ENCODE measurements at regions of chr2 and their contacts with region 1.

Region 1: DNA sequence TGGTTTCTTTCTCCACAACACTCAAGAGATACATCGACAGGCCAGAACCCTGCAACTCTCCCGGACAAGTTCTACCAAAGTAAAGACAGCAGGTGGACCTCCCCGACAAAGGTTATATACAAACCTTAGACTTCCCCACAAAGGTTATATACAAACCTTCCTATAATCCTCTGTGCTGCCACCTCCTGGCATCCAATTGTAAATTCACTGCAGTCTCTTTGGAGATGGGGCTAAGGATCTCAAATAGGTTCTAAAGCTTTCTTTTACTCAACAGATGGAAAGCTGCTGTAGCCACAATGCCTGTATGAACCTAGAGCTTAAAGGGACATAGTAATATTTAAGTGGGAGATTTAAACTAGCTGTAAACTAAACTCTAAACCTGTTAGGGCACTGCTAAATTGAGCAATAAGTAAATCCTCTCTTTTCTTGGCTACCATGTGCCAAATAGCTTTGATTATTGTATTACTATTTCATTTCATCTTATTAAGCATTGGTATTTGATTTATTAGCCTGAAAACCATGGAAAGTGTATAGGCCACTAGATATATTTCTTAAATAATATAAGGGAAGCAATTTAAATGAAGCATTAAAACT is 9.8 kb upstream of the MREG start:
- DNase-seq: peak in 25 of 35 experiments; percentile 7 to 68 (median 29)
- ATAC-seq: peak in 3 of 4 experiments; percentile 52 to 73 (median 57)
- H3K4me3 ChIP-seq: no peak overlapping the region
- H3K4me3 Mint-ChIP-seq: no peak overlapping the region
- H3K27ac ChIP-seq: no peak overlapping the region
- H3K27ac Mint-ChIP-seq: no peak overlapping the region
- H3K4me1 ChIP-seq: no peaks in the 10 kb centered on the region
- H3K4me1 Mint-ChIP-seq: peaks cover 4 to 7% (median 5%) of the 10 kb centered on the region in 3 donors
- H3K27me3 ChIP-seq: no peaks in the 10 kb centered on the region
- H3K27me3 Mint-ChIP-seq: no peaks in the 10 kb centered on the region

Region 2: GRCh38 chr2:215949991-215950404 is 73.2 kb before region 1 on chr2:
- CTCF ChIA-PET with region 1: interaction called, 12 to 22 read pairs
- POLR2A ChIA-PET with region 1: no interaction called
- DNase-seq: peak in 1 of 35 experiments; percentile 51
- ATAC-seq: peak in 3 of 4 experiments; percentile 40 to 56 (median 41)
- H3K4me3 ChIP-seq: no peak overlapping the region
- H3K4me3 Mint-ChIP-seq: no peak overlapping the region
- H3K27ac ChIP-seq: no peak overlapping the region
- H3K27ac Mint-ChIP-seq: no peak overlapping the region
- H3K4me1 ChIP-seq: peaks cover 0 to 2% of the 10 kb centered on the region in 2 experiments
- H3K4me1 Mint-ChIP-seq: no peaks in the 10 kb centered on the region
- H3K27me3 ChIP-seq: no peaks in the 10 kb centered on the region
- H3K27me3 Mint-ChIP-seq: no peaks in the 10 kb centered on the region

Region 3: DNA sequence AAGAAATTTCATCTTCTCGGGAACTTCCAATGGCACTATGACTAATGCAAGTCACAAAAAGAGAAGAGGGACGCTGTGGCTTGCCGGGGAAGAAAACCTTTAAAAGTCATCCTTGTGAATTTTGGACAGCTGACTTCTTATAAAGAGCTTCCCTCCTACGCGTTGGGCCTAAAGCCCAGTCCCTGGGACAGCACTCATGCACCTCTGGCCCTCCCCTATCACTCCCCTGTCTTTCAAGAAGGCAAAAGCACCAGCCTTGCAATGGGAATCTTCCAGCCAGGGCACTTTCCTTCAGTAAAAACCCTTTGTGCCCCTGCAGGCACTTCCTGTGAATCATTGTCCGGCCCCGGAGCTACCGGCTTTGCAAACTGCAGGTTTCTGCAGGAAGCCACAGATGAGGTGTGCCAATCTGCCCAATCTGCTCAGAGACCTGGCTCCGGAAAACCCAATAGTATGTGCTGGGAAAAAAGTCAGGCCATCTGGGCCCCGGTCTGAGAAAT is 16.9 kb before region 1 on chr2:
- CTCF ChIA-PET with region 1: interaction called in 1 of 2 experiments, 11 read pairs
- POLR2A ChIA-PET with region 1: no interaction called
- DNase-seq: peak in 14 of 35 experiments; percentile 6 to 35 (median 16)
- ATAC-seq: peak; percentile 57 to 80 (median 68)
- H3K4me3 ChIP-seq: no peak overlapping the region
- H3K4me3 Mint-ChIP-seq: peak overlapping the region; percentile 5 to 25 (median 13)
- H3K27ac ChIP-seq: no peak overlapping the region
- H3K27ac Mint-ChIP-seq: peak overlapping the region; percentile 69 to 77
- H3K4me1 ChIP-seq: peaks cover 22 to 37% of the 10 kb centered on the region in 2 experiments
- H3K4me1 Mint-ChIP-seq: peaks cover 35 to 47% (median 44%) of the 10 kb centered on the region in 3 donors
- H3K27me3 ChIP-seq: no peaks in the 10 kb centered on the region
- H3K27me3 Mint-ChIP-seq: no peaks in the 10 kb centered on the region

Region 4: GRCh38 chr2:216034065-216034464 is 10.9 kb after region 1 on chr2:
- CTCF ChIA-PET with region 1: interaction called, 9 to 11 read pairs
- POLR2A ChIA-PET with region 1: interaction called in 1 of 2 experiments, 7 read pairs
- DNase-seq: peak; percentile 30 to 85 (median 67)
- ATAC-seq: peak; percentile 72 to 83 (median 80)
- H3K4me3 ChIP-seq: no peak overlapping the region
- H3K4me3 Mint-ChIP-seq: no peak overlapping the region
- H3K27ac ChIP-seq: no peak overlapping the region
- H3K27ac Mint-ChIP-seq: no peak overlapping the region
- H3K4me1 ChIP-seq: peaks cover 4% of the 10 kb centered on the region in 2 experiments
- H3K4me1 Mint-ChIP-seq: peaks cover 12 to 25% (median 15%) of the 10 kb centered on the region in 3 donors
- H3K27me3 ChIP-seq: no peaks in the 10 kb centered on the region
- H3K27me3 Mint-ChIP-seq: no peaks in the 10 kb centered on the region

Region 5: DNA sequence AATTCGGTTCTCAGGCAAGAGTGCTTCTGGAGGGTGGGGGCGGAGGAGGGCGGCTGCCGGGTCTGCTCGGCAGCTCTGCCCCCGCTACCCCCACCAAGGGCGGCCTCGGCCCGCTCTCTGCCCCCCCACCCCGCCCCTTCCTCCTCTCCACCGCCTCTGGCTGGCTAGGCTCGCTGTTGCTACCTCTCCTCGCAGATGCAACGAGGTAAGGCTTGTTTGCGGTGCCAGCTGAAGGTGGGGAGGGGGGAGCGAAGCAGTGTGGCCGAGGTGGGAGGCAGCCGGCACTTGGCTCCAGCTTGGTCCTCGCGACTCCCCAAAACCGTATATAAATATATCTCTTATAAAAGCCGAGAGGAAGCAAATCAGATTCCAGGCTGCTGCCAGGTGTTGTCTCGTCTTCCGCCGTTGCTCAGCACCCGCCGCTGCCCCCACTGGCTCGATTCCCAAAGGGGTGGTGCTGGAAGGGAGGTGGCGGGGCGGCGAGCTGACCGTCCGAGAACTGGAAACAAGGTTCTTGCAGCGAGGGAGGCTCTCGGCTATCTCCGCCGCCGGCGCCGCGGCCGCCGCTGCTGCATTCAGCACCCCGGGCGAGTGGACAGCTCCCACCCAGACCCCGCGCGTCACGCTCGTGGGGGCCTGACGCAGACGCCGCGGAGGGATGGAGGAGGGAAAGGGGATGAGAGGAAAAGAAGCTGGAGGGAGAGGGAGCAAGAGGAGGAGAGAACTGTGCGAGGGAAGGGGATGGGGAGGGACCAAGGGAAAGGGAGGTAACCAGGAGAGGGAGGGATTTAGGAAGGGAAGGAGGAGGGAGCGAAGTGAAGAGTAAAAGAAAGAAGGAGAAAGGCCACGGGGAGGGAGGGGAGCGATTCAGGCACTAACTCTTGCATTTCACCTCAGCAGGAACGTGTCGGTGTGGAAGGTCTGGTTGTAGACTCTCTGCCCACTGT is 348.9 kb after region 1 on chr2 and contains the start of gene MARCHF4:
- CTCF ChIA-PET with region 1: no interaction called
- POLR2A ChIA-PET with region 1: no interaction called
- DNase-seq: peak; percentile 14 to 78 (median 57)
- ATAC-seq: peak; percentile 78 to 90 (median 84)
- H3K4me3 ChIP-seq: peak within 1 kb of the TSS; percentile 10 to 40
- H3K4me3 Mint-ChIP-seq: peak within 1 kb of the TSS in 2 of 3 donors; percentile 45 to 68
- H3K27ac ChIP-seq: no peak within 1 kb of the TSS
- H3K27ac Mint-ChIP-seq: peak within 1 kb of the TSS in 1 of 2 donors; percentile 27
- H3K4me1 ChIP-seq: peaks cover 5 to 17% of the 10 kb centered on the region in 2 experiments
- H3K4me1 Mint-ChIP-seq: peaks cover 17 to 24% (median 23%) of the 10 kb centered on the region in 3 donors
- H3K27me3 ChIP-seq: peaks cover 10 to 37% of the 10 kb centered on the region in 2 experiments
- H3K27me3 Mint-ChIP-seq: peaks cover 52 to 55% of the 10 kb centered on the region in 2 donors
- total RNA-seq, gene MARCHF4: not detected